Activated CD8-positive, alpha-beta memory T cell treated with anti-CD3 and anti-CD28 coated beads, Interleukin-2, amount 10 ng/mL, durations not matched to agents 7 days and 5 days (primary cell): ENCODE measurements at regions of chr1 and their contacts with region 1.

Region 1: DNA sequence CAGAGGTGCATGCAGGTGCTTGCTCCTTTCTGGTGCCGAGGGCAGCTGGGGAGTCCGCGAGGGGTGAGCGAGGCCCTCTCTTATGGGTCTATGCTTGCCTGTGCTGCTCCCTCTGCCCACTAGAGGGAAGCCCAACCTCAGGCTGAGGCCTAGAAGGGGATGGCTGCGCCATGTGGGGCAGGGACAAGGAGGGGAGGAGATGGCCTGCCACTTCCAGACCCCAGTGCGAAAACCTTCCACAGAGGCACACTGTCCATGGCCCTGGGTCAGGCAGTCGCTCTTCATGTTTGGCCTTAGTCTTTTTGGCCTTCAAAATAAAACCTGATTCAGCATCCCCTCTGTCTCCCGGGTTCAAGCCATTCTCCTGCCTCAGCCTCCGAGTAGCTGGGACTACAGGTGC is 14.0 kb downstream of the RHBG start:
- DNase-seq: peak; percentile 74
- ATAC-seq: peak; percentile 84
- H3K4me3 Mint-ChIP-seq: no peak overlapping the region
- H3K27ac Mint-ChIP-seq: no peak overlapping the region
- H3K4me1 Mint-ChIP-seq: peaks cover 6% of the 10 kb centered on the region
- H3K27me3 Mint-ChIP-seq: peaks cover 14% of the 10 kb centered on the region

Region 2: GRCh38 chr1:156247460-156248322 is 135.3 kb before region 1 on chr1 and contains the start of gene PAQR6:
- CTCF ChIA-PET with region 1: no interaction called
- DNase-seq: no peak
- ATAC-seq: no peak
- H3K4me3 Mint-ChIP-seq: no peak within 1 kb of the TSS
- H3K27ac Mint-ChIP-seq: peak within 1 kb of the TSS; percentile 65
- H3K4me1 Mint-ChIP-seq: peaks cover 36% of the 10 kb centered on the region
- H3K27me3 Mint-ChIP-seq: no peaks in the 10 kb centered on the region
- total RNA-seq, gene PAQR6: 5.0 to 6.1 TPM

Region 3: GRCh38 chr1:156366378-156367166 is 16.5 kb before region 1 on chr1:
- CTCF ChIA-PET with region 1: interaction called, 40 read pairs
- DNase-seq: no peak
- ATAC-seq: no peak
- H3K4me3 Mint-ChIP-seq: no peak overlapping the region
- H3K27ac Mint-ChIP-seq: no peak overlapping the region
- H3K4me1 Mint-ChIP-seq: peaks cover 3% of the 10 kb centered on the region
- H3K27me3 Mint-ChIP-seq: peaks cover 43% of the 10 kb centered on the region

Region 4: GRCh38 chr1:156407344-156407743 is 24.3 kb after region 1 on chr1:
- CTCF ChIA-PET with region 1: interaction called, 19 read pairs
- DNase-seq: no peak
- ATAC-seq: no peak
- H3K4me3 Mint-ChIP-seq: no peak overlapping the region
- H3K27ac Mint-ChIP-seq: no peak overlapping the region
- H3K4me1 Mint-ChIP-seq: no peaks in the 10 kb centered on the region
- H3K27me3 Mint-ChIP-seq: peaks cover 46% of the 10 kb centered on the region

Region 5: GRCh38 chr1:156435545-156436141 is 52.6 kb after region 1 on chr1:
- CTCF ChIA-PET with region 1: interaction called, 107 read pairs
- DNase-seq: no peak
- ATAC-seq: peak; percentile 27
- H3K4me3 Mint-ChIP-seq: peak overlapping the region; percentile 69
- H3K27ac Mint-ChIP-seq: peak overlapping the region; percentile 50
- H3K4me1 Mint-ChIP-seq: peaks cover 22% of the 10 kb centered on the region
- H3K27me3 Mint-ChIP-seq: peaks cover 92% of the 10 kb centered on the region

Region 6: GRCh38 chr1:156471496-156472490 is 88.8 kb after region 1 on chr1:
- CTCF ChIA-PET with region 1: interaction called, 19 read pairs
- DNase-seq: no peak
- ATAC-seq: no peak
- H3K4me3 Mint-ChIP-seq: no peak overlapping the region
- H3K27ac Mint-ChIP-seq: no peak overlapping the region
- H3K4me1 Mint-ChIP-seq: peaks cover 37% of the 10 kb centered on the region
- H3K27me3 Mint-ChIP-seq: no peaks in the 10 kb centered on the region

Region 7: DNA sequence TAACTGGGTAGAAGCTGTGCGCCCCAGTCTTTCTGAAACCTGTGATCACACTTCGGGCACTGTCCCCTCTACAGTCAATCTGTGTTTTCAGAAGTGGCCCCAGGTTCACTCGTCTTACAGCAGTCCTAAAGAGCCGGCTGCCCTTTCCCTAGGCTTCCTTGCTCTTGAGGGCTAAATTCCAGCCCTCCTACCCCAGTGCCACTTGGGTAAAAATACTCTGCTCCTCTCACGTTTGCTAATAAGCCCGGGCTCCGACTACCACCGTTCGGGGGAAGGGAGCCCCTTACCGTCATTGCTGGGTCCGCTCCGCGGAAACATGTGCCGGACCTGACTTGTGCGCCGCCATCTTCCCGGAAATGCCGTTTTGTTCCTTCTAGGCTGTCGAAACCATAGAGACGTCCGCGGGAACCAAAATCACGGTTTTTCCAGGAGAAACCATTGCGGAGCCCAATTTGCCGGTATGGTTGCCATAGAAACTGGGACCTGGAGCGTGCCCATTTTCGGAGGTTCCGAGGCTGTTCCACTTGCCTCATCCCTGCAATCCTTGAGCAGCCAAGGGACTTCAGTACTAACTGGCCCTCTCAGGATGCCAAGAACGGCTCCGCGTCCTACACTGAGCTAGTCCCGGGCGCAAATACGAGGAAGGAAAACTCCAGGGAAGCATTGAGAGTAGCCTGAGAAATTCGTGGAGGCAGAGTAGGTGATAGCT is 218.3 kb after region 1 on chr1 and contains the start of gene GPATCH4:
- CTCF ChIA-PET with region 1: interaction called, 13 read pairs
- DNase-seq: peak; percentile 94
- ATAC-seq: peak; percentile 85
- H3K4me3 Mint-ChIP-seq: peak within 1 kb of the TSS; percentile 99
- H3K27ac Mint-ChIP-seq: peak within 1 kb of the TSS; percentile 98
- H3K4me1 Mint-ChIP-seq: peaks cover 37% of the 10 kb centered on the region
- H3K27me3 Mint-ChIP-seq: no peaks in the 10 kb centered on the region
- total RNA-seq, gene GPATCH4: 40.5 to 50.9 TPM

Region 8: GRCh38 chr1:156625436-156626078 is 242.5 kb after region 1 on chr1:
- CTCF ChIA-PET with region 1: interaction called, 18 read pairs
- DNase-seq: peak; percentile 64
- ATAC-seq: peak; percentile 64
- H3K4me3 Mint-ChIP-seq: no peak overlapping the region
- H3K27ac Mint-ChIP-seq: no peak overlapping the region
- H3K4me1 Mint-ChIP-seq: peaks cover 8% of the 10 kb centered on the region
- H3K27me3 Mint-ChIP-seq: peaks cover 68% of the 10 kb centered on the region